ENCODE measurements at regions of chr2 and their contacts with region 1.

Region 1: GRCh38 chr2:46812361-46813024 is 103.1 kb downstream of the MCFD2 start:
- DNase-seq: peak; percentile 69 to 90
- H3K4me3 ChIP-seq: no peak overlapping the region
- CTCF ChIP-seq: no peak
- POLR2A ChIP-seq: no peak

Region 2: GRCh38 chr2:45759310-45759851 is 1053.1 kb before region 1 on chr2:
- intact Hi-C with region 1: loop called (anchors 10 kb)
- DNase-seq: peak in 1 of 2 donors; percentile 18
- H3K4me3 ChIP-seq: no peak overlapping the region
- CTCF ChIP-seq: no peak
- POLR2A ChIP-seq: no peak

Measured in lower leg skin (tissue), 4 donors.